ENCODE measurements at regions of chr1 and their contacts with region 1.

Region 1: DNA sequence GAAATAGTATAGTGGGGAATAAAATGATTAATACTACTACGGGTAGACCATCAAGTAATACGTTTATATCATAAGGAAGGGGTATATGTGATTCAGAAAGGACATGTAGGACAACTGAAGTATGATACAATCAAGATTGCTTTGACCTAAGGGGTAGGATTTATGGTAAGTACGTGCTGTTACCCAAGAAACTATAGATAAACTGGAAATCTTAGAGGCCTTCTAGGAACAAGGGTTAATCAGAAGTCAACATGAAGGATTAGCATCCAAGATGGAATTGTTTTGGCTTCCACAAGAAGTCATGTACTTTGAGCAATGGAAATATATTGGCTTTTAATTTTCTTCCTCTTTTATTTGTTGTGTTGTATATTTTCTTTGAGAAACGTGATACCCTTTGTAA is 13.2 kb upstream of the ZMYM4 start:
- DNase-seq: no peak
- ATAC-seq: no peak
- H3K4me3 ChIP-seq: no peak overlapping the region
- H3K27ac ChIP-seq: no peak overlapping the region
- H3K4me1 ChIP-seq: no peaks in the 10 kb centered on the region
- H3K27me3 ChIP-seq: no peaks in the 10 kb centered on the region
- CTCF ChIP-seq: no peak
- EP300 ChIP-seq: no peak
- POLR2A ChIP-seq: no peak
- RAD21 ChIP-seq: no peak

Region 2: DNA sequence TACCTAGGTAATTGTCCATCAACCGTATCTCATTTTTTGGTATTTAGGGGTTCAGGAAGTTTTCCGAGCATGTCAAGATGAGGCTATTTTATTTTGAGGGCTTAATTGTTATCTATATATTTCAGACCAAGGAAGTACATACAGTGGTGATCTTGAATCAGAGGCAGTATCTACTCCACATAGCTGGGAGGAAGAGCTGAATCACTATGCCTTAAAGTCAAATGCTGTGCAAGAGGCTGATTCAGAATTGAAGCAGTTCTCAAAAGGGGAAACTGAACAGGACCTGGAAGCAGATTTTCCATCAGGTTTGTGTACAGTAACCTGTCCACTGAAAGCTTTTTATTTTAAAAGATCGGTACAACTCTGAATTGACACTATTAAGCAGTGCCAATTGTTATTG is 143.5 kb after region 1 on chr1:
- CTCF ChIA-PET with region 1: no interaction called
- POLR2A ChIA-PET with region 1: interaction called, 13 read pairs
- RAD21 ChIA-PET with region 1: no interaction called
- SMC1A ChIA-PET with region 1: no interaction called
- in situ Hi-C with region 1: no loop called
- intact Hi-C with region 1: no loop called
- DNase-seq: no peak
- ATAC-seq: no peak
- H3K4me3 ChIP-seq: no peak overlapping the region
- H3K27ac ChIP-seq: no peak overlapping the region
- H3K4me1 ChIP-seq: no peaks in the 10 kb centered on the region
- H3K27me3 ChIP-seq: no peaks in the 10 kb centered on the region
- CTCF ChIP-seq: no peak
- EP300 ChIP-seq: no peak
- POLR2A ChIP-seq: no peak
- RAD21 ChIP-seq: no peak

Measured in GM12878 (cell line).